Posterior cingulate gyrus (tissue), 11 donors: ENCODE measurements at regions of chr2 and their contacts with region 1.

Region 1: GRCh38 chr2:190180313-190181122 is 118.0 kb upstream of the MSTN start:
- DNase-seq: peak; percentile 37 to 94 (median 54)

Region 2: GRCh38 chr2:190121971-190122370 is 58.5 kb before region 1 on chr2:
- intact Hi-C with region 1: loop called (anchors 5 kb)
- DNase-seq: no peak

Region 3: DNA sequence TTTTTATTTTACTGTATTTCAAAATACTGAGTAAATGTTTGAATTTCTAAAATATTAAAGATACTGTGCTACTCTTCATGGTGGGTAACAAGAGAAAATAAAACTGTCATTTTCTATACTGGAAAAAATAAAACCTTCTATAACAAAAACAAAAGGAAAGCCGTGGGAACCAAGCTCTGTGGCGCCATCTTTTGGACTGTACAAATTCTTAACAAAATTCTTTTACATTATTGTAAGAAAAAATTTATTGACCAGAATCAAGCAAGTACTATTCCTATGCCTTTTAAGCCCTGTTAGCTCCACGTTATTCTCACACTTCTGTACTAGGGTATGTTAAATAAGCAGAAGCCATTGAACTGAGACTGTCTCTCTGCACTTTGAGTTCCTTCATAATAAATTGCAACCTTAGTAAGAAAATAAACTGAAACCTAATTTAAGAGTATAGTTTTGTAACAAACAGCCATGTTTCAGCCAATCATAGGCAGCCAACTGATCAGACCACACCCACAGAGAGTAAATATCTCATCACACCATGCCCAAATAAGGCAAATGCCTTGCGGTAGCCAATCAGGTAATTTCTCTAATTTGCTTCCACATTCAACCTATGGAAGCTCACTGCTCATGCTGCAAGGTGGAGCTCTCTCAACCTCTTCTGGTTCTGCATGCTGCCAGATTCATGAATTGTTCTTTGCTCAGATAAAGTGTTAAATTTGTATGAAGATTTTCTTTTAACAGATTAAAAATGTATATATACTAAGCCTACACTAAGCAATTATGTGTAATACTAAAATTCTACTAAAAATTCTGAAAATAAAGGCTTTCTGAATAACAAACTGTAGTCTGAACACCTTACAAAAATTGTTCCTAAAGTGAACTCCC is 97.0 kb after region 1 on chr2:
- intact Hi-C with region 1: loop called (anchors 5 kb)
- DNase-seq: no peak

Region 4: GRCh38 chr2:190319555-190320498 is 139.3 kb after region 1 on chr2 and contains the start of gene HIBCH:
- intact Hi-C with region 1: loop called (anchors 2 kb)
- DNase-seq: peak; percentile 98 to 100 (median 98)